ENCODE measurements at regions of chr9 and their contacts with region 1.

Region 1: DNA sequence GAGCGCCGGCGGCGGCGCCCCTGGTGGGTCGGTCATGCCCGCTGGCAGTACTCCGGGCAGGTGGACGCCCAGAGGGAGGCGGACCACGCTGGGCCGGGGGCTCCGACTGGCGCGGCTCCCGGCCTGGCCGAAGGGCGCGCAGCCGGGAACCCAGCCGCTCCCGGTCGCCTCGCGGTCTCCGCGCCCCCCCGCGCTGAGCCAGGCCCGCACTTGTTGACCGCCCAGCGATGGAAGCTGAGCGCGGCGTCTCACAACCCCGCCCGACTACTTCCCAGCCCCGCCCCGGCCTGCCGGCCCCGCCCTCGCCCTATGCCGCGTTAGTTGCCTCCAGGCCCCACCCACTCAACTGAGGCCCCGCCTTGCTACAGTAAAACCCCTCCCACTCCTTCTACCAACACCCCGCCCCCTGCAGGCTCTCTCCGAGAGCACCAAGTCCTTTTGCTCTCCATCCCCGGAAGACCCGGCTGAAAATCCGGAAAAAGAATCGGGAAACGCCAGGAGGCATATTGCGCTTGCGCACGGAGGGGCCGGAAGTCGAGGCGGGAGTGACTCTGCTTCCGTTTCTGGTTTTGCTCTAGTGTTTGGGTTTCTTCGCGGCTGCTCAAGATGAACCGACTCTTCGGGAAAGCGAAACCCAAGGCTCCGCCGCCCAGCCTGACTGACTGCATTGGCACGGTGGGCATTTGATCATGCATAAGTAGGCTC is at the starts of genes BAG1 and CHMP5:
- DNase-seq: peak; percentile 98 to 100 (median 100)
- ATAC-seq: peak; percentile 87 to 91
- H3K4me3 Mint-ChIP-seq: peak within 1 kb of the TSS; percentile 86 to 99 (median 94)
- H3K27ac Mint-ChIP-seq: peak within 1 kb of the TSS; percentile 92 to 100 (median 98)
- H3K4me1 Mint-ChIP-seq: peaks cover 31 to 50% (median 48%) of the 10 kb centered on the region in 4 donors
- H3K27me3 Mint-ChIP-seq: no peaks in the 10 kb centered on the region
- polyA plus RNA-seq, gene BAG1: 80.5 to 92.6 (median 86.8) TPM
- polyA plus RNA-seq, gene CHMP5: 38.7 to 40.0 (median 39.4) TPM

Region 2: GRCh38 chr9:33290247-33291030 is 25.8 kb after region 1 on chr9 and contains the start of gene NFX1:
- POLR2A ChIA-PET with region 1: interaction called, 44 read pairs
- DNase-seq: peak; percentile 93 to 100 (median 99)
- ATAC-seq: peak; percentile 84 to 85
- H3K4me3 Mint-ChIP-seq: peak within 1 kb of the TSS; percentile 82 to 99 (median 95)
- H3K27ac Mint-ChIP-seq: peak within 1 kb of the TSS; percentile 97 to 100 (median 99)
- H3K4me1 Mint-ChIP-seq: peaks cover 27 to 72% (median 63%) of the 10 kb centered on the region in 4 donors
- H3K27me3 Mint-ChIP-seq: peaks cover 0 to 2% (median 0%) of the 10 kb centered on the region in 5 donors
- polyA plus RNA-seq, gene NFX1: 22.8 to 42.7 (median 31.6) TPM

Region 3: GRCh38 chr9:33320568-33321261 is 56.1 kb after region 1 on chr9:
- POLR2A ChIA-PET with region 1: no interaction called
- DNase-seq: no peak
- ATAC-seq: no peak
- H3K4me3 Mint-ChIP-seq: no peak overlapping the region
- H3K27ac Mint-ChIP-seq: peak overlapping the region in 1 of 10 donors; percentile 4
- H3K4me1 Mint-ChIP-seq: peaks cover 0 to 2% (median 0%) of the 10 kb centered on the region in 4 donors
- H3K27me3 Mint-ChIP-seq: no peaks in the 10 kb centered on the region